ENCODE measurements at regions of chr5 and their contacts with region 1.

Region 1: GRCh38 chr5:141849375-141850243 is 28.6 kb downstream of the PCDH1 start:
- DNase-seq: peak; percentile 41 to 77 (median 56)
- ATAC-seq: peak; percentile 82
- H3K4me3 ChIP-seq: peak overlapping the region; percentile 98
- H3K4me3 Mint-ChIP-seq: peak overlapping the region; percentile 86 to 93 (median 89)
- H3K27ac ChIP-seq: peak overlapping the region; percentile 74
- H3K27ac Mint-ChIP-seq: peak overlapping the region; percentile 54 to 98 (median 88)
- H3K4me1 ChIP-seq: no peaks in the 10 kb centered on the region
- H3K4me1 Mint-ChIP-seq: peaks cover 6 to 24% (median 12%) of the 10 kb centered on the region in 7 donors
- H3K27me3 ChIP-seq: no peaks in the 10 kb centered on the region
- H3K27me3 Mint-ChIP-seq: peaks cover 0 to 2% (median 0%) of the 10 kb centered on the region in 5 donors

Region 2: DNA sequence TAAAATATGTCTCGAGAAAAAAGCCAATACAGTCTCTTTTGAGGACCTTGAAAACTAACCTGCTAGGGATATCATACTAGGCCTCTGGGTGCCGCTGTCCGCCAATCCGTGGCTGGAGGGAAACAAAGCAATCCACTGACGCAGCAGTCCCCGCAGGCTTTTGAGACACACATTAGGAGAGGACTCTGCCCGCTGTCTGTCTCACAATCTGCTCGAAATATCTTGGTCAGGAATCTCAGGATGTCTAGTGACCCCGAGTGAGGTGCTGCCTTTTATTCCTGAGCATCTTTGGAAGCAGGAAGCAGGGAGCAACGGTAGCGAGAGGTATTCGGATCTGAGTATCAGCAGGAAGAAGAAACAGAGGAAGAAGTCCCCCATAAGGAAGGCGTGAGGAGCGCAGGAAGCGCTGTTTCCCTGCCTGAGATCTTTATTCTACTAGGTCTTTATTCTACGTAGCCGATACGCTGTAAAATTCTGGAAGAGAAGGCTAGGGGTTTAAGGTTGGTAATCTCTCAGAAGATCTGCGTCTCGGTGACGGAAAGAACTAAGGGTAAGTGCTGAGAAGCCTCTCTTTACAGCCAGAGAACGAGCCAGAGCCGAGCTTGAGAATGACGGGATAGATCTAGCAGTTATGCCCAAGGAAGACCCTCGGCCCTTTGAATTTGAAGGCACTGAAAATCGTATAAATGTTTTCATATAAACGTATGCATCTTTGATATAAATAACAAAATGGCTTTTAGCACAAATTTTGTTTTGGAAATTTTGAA is 523.3 kb before region 1 on chr5:
- CTCF ChIA-PET with region 1: no interaction called
- POLR2A ChIA-PET with region 1: no interaction called
- intact Hi-C with region 1: no loop called
- DNase-seq: peak; percentile 39 to 75 (median 57)
- ATAC-seq: peak; percentile 95
- H3K4me3 ChIP-seq: peak overlapping the region; percentile 73
- H3K4me3 Mint-ChIP-seq: peak overlapping the region; percentile 78 to 98 (median 90)
- H3K27ac ChIP-seq: peak overlapping the region; percentile 53
- H3K27ac Mint-ChIP-seq: peak overlapping the region; percentile 17 to 95 (median 80)
- H3K4me1 ChIP-seq: no peaks in the 10 kb centered on the region
- H3K4me1 Mint-ChIP-seq: peaks cover 0 to 15% (median 7%) of the 10 kb centered on the region in 7 donors
- H3K27me3 ChIP-seq: peaks cover 0 to 5% of the 10 kb centered on the region in 2 donors
- H3K27me3 Mint-ChIP-seq: peaks cover 8 to 48% (median 41%) of the 10 kb centered on the region in 5 donors

Region 3: DNA sequence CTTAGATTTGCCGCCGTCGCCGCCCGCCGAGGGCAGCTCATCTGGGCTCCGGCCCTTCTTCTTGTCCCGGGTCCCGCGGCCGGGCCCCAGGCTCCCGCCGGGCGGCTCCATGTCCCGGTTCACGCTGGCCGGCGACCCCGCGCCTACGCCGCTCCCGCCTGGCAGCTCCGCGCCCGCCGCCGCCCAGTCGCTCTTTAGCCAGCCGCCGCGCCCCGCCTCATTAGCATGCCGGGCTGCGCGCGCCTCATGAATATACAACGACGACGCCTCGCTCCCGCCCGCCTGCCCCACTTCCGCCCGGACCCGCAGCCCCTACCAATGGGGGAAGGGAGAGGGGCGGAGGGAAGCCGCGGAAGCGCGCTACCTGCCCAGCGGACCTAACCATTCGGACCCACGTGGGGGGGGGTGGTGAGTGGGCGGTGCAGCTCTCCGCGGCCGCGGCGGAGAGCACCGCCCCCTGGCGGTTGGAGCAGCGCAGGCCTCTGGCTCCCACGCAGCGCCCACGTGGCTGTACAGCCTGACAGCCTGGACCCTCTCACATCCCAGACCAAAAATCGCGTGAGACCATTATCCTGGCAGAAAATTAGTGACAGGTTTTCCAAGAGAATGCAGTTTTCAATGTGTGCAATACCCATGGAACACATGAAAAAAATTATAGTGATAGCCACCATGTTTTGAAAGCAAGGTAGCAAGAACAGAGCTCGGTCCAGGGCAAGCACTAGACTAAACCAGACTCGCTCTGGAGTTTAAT is 230.6 kb before region 1 on chr5 and contains the start of gene DIAPH1:
- CTCF ChIA-PET with region 1: no interaction called
- POLR2A ChIA-PET with region 1: no interaction called
- intact Hi-C with region 1: no loop called
- DNase-seq: peak; percentile 91 to 98 (median 96)
- ATAC-seq: peak; percentile 98
- H3K4me3 ChIP-seq: peak within 1 kb of the TSS; percentile 77
- H3K4me3 Mint-ChIP-seq: peak within 1 kb of the TSS; percentile 94 to 100 (median 100)
- H3K27ac ChIP-seq: peak within 1 kb of the TSS; percentile 97
- H3K27ac Mint-ChIP-seq: peak within 1 kb of the TSS; percentile 91 to 99 (median 95)
- H3K4me1 ChIP-seq: peaks cover 11 to 22% of the 10 kb centered on the region in 2 donors
- H3K4me1 Mint-ChIP-seq: peaks cover 44 to 61% (median 56%) of the 10 kb centered on the region in 7 donors
- H3K27me3 ChIP-seq: no peaks in the 10 kb centered on the region
- H3K27me3 Mint-ChIP-seq: no peaks in the 10 kb centered on the region
- total RNA-seq, gene DIAPH1: 163 to 278 (median 173) TPM

Region 4: DNA sequence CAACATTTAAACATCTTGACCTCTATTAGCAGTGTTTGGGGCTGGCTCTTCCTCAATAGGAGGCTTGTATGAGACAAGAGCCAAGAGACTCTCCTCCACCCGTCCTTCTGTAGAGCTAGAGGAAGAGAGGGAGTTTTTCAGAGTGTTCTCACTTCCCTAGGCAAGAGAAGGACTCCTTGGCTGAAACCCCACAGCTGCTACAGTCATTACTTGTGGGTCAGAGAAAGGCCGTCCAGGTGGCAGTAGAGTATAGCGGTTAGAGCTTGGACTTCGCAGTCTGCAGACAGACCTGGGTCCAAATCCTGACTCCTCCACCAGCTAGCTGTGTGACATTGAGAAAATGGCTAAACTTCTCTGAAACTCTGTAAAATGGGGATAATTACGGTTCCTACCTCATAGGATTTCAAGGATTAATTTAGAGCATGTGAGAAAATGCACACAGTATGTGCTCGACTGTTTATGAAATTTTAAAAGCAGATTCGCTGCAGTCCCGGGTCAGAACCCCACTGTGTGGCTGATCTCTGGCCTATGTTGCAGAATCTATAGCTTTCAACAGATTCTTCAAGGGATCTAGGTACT is 86.7 kb before region 1 on chr5:
- CTCF ChIA-PET with region 1: no interaction called
- POLR2A ChIA-PET with region 1: no interaction called
- intact Hi-C with region 1: no loop called
- DNase-seq: no peak
- ATAC-seq: no peak
- H3K4me3 ChIP-seq: no peak overlapping the region
- H3K4me3 Mint-ChIP-seq: no peak overlapping the region
- H3K27ac ChIP-seq: no peak overlapping the region
- H3K27ac Mint-ChIP-seq: no peak overlapping the region
- H3K4me1 ChIP-seq: no peaks in the 10 kb centered on the region
- H3K4me1 Mint-ChIP-seq: peaks cover 0 to 8% (median 0%) of the 10 kb centered on the region in 7 donors
- H3K27me3 ChIP-seq: no peaks in the 10 kb centered on the region
- H3K27me3 Mint-ChIP-seq: peaks cover 25 to 50% (median 34%) of the 10 kb centered on the region in 5 donors

Region 5: DNA sequence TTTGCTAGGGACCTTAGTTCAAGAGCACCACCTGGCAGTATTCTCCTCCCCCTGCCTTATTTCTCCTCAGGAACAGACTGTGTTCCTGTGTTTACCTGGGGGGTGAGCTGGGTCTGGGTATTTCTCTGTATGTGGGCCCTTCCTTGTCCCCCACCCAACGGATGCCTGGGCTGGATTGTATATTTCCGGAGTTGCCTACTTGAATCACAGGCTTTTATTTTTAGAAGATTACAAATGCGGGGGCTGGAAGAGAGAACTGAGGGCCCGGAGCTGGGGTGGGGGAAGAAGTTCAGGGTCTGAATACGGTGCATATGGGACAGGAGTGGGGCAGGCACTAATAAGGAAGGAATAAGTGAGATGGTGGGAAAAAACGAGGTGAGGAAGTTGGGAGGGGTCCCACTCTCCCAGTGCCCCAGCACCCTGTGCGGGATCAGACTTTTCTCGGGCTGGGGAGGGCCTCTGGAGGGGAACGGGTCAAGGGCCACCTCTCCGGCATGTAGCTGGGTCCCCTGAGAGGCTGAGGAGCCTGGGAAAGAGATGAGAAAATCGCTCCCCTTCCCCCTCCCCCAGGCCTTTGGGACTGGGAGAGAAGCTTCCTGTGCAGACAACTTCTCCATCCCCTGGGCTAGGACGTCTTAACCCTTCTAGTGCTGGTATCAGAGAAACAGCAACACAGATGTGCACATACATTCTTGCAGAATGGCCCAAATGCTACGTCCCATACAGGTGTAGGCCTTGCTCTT is 13.5 kb before region 1 on chr5:
- CTCF ChIA-PET with region 1: no interaction called
- POLR2A ChIA-PET with region 1: no interaction called
- intact Hi-C with region 1: loop called in 1 of 2 experiments (anchors 1 kb)
- DNase-seq: no peak
- ATAC-seq: no peak
- H3K4me3 ChIP-seq: no peak overlapping the region
- H3K4me3 Mint-ChIP-seq: peak overlapping the region in 7 of 10 donors; percentile 2 to 67 (median 48)
- H3K27ac ChIP-seq: no peak overlapping the region
- H3K27ac Mint-ChIP-seq: peak overlapping the region in 1 of 9 donors; percentile 20
- H3K4me1 ChIP-seq: peaks cover 0 to 12% of the 10 kb centered on the region in 2 donors
- H3K4me1 Mint-ChIP-seq: peaks cover 9 to 21% (median 17%) of the 10 kb centered on the region in 7 donors
- H3K27me3 ChIP-seq: no peaks in the 10 kb centered on the region
- H3K27me3 Mint-ChIP-seq: peaks cover 0 to 13% (median 1%) of the 10 kb centered on the region in 5 donors

Region 6: DNA sequence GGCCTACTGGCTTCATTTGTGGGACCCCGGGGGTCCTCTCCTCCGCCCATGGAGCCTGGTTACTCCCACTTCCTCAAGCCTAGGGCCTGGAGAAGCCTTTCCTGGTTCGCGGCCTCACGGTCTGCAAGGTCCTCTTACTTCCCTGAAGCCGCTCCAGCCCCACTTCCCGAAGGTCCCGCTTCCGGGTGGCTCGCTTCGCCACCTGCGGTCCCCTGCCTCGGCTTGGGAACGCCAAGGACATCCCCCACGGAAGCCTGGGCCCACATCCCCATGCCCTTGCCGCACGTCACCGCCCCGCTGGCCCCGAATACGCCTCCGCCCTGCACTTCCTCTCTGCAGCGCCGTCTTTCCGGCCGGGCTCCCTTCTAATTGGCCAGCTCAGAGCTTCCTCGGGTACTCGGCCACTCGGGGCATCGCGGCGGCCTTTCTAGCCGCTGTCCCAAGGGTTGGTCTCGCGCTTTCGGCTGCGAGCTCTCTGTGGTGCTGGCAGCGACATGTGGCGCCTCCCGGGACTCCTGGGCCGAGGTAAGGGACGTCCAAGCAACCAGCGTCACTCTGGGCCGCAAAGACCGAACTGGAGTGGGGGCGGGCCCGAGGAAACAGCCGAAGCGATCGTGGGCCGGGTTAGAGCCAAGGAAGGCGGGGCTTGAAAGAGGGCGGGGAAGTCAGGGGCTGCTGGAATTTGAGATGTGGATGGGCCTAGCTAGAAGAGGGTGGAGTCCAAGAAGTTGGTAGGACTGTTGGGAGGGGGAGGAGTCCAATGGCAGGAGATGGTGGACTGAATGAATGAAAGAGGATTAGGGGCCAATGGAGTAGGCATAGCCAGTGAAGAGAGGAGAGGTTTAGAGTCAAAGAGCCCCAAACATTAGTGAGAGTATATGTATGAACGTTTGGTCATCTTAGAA is 74.1 kb after region 1 on chr5 and contains the start of gene DELE1:
- CTCF ChIA-PET with region 1: no interaction called
- POLR2A ChIA-PET with region 1: interaction called, 5 read pairs
- intact Hi-C with region 1: loop called (anchors 1 kb)
- DNase-seq: peak; percentile 79 to 92 (median 90)
- ATAC-seq: peak; percentile 97
- H3K4me3 ChIP-seq: peak within 1 kb of the TSS; percentile 81
- H3K4me3 Mint-ChIP-seq: peak within 1 kb of the TSS; percentile 88 to 98 (median 94)
- H3K27ac ChIP-seq: peak within 1 kb of the TSS; percentile 98
- H3K27ac Mint-ChIP-seq: peak within 1 kb of the TSS; percentile 87 to 99 (median 98)
- H3K4me1 ChIP-seq: peaks cover 10 to 14% of the 10 kb centered on the region in 2 donors
- H3K4me1 Mint-ChIP-seq: peaks cover 23 to 54% (median 36%) of the 10 kb centered on the region in 7 donors
- H3K27me3 ChIP-seq: no peaks in the 10 kb centered on the region
- H3K27me3 Mint-ChIP-seq: no peaks in the 10 kb centered on the region
- total RNA-seq, gene DELE1: 77.3 to 101 (median 88.2) TPM

Region 7: GRCh38 chr5:142120247-142120935 is 270.8 kb after region 1 on chr5:
- CTCF ChIA-PET with region 1: no interaction called
- POLR2A ChIA-PET with region 1: no interaction called
- intact Hi-C with region 1: no loop called
- DNase-seq: no peak
- ATAC-seq: no peak
- H3K4me3 ChIP-seq: no peak overlapping the region
- H3K4me3 Mint-ChIP-seq: peak overlapping the region; percentile 34 to 83 (median 72)
- H3K27ac ChIP-seq: peak overlapping the region; percentile 10
- H3K27ac Mint-ChIP-seq: peak overlapping the region; percentile 32 to 88 (median 75)
- H3K4me1 ChIP-seq: peaks cover 29 to 59% of the 10 kb centered on the region in 2 donors
- H3K4me1 Mint-ChIP-seq: peaks cover 58 to 94% (median 74%) of the 10 kb centered on the region in 7 donors
- H3K27me3 ChIP-seq: no peaks in the 10 kb centered on the region
- H3K27me3 Mint-ChIP-seq: no peaks in the 10 kb centered on the region

Measured in naive thymus-derived CD4-positive, alpha-beta T cell (primary cell).